Naive thymus-derived CD4-positive, alpha-beta T cell (primary cell): ENCODE measurements at regions of chr4 and their contacts with region 1.

Region 1: DNA sequence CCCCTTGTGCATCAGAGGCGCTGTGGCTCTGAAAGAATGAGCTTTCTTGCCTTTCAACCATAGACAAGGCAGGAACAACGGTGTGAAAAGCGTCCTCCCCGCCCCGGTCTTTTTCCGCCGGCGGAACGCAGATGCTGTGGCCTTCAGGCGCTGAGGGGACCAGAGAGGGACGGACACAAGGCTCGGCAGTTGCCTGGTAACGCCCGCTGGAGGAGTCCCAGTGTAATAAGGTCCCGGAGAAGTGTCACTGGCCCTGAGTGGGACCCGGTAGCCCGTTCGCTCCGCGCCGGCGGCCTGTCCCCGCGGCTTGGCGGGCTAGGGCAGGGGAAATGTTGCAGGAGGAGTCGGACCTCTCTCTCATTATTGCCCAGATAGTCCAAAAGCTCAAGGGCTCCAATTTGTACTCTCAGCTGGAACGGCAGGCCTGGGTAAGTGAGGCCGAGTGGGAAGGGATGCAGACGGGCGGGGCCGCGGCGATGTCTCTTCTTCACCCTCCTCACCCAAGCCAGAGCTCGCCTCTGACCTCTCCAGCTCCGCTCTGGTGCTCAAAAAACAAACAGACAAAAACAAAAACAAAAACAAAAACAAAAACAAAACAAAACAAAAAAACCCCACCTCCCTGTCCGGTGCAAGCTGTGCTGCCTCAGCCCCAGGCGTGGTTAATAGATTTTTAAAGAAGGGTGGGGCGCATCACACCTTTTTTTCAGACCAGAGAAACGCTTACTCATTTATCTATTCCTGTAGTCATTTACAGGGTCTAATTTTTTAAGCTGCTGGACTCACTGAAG is at the start of gene TBC1D19:
- DNase-seq: peak; percentile 77 to 92 (median 87)
- ATAC-seq: peak; percentile 96
- H3K4me3 ChIP-seq: peak within 1 kb of the TSS; percentile 83
- H3K4me3 Mint-ChIP-seq: peak within 1 kb of the TSS; percentile 86 to 98 (median 95)
- H3K27ac ChIP-seq: peak within 1 kb of the TSS; percentile 92
- H3K27ac Mint-ChIP-seq: peak within 1 kb of the TSS; percentile 96 to 100 (median 98)
- H3K4me1 ChIP-seq: peaks cover 10 to 11% of the 10 kb centered on the region in 2 donors
- H3K4me1 Mint-ChIP-seq: peaks cover 10 to 51% (median 28%) of the 10 kb centered on the region in 7 donors
- H3K27me3 ChIP-seq: no peaks in the 10 kb centered on the region
- H3K27me3 Mint-ChIP-seq: peaks cover 0 to 5% (median 0%) of the 10 kb centered on the region in 5 donors
- total RNA-seq, gene TBC1D19: 4.9 to 8.7 (median 6.4) TPM

Region 2: GRCh38 chr4:25159884-25160713 is 1424.0 kb before region 1 on chr4 and contains the start of gene SEPSECS:
- CTCF ChIA-PET with region 1: no interaction called
- POLR2A ChIA-PET with region 1: no interaction called
- intact Hi-C with region 1: loop called (anchors 5 kb)
- DNase-seq: peak; percentile 82 to 96 (median 94)
- ATAC-seq: peak; percentile 89
- H3K4me3 ChIP-seq: peak within 1 kb of the TSS; percentile 75
- H3K4me3 Mint-ChIP-seq: peak within 1 kb of the TSS; percentile 87 to 97 (median 94)
- H3K27ac ChIP-seq: peak within 1 kb of the TSS; percentile 97
- H3K27ac Mint-ChIP-seq: peak within 1 kb of the TSS; percentile 93 to 98 (median 96)
- H3K4me1 ChIP-seq: peaks cover 4 to 14% of the 10 kb centered on the region in 2 donors
- H3K4me1 Mint-ChIP-seq: peaks cover 33 to 66% (median 52%) of the 10 kb centered on the region in 7 donors
- H3K27me3 ChIP-seq: no peaks in the 10 kb centered on the region
- H3K27me3 Mint-ChIP-seq: peaks cover 0 to 2% (median 0%) of the 10 kb centered on the region in 5 donors
- total RNA-seq, gene SEPSECS: 14.4 to 25.0 (median 17.2) TPM

Region 3: DNA sequence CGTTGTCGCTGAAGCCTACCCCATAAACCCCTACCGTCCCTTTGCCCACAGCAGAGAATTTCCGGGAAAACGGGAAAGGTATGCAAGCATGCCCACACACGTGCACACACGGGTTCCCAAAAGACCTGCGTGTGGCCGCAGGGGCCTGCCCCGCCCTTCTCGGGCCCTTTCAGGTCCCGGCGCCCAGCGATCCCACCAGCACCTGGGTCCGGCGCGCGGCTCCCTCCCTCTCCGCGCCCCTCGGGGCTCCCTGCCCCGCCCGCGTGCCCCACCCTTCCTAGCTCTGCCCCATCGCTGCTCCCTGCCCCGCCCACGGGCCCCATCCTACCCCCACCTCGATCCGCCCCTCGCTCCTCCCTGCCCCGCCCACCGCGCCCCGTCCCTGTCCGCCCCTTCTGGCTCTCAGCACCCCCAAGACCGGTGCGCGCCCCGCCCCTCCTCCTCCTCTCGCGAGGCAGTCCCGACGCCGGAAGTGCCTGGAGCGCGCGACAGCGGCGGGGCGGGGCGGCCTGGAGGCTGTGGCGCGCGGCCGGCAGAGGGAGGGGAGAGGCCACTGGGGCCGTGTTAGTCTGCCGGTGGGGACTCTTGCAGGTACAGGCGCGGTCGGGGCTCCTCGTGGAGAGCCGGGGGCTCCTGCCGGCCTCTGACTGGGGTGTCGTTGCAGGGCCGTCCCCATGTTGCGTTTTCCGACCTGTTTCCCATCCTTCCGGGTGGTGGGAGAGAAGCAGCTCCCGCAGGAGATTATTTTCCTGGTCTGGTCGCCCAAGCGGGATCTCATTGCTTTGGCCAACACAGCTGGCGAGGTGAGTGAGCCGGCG is 1207.1 kb before region 1 on chr4 and contains the start of gene ANAPC4:
- CTCF ChIA-PET with region 1: no interaction called
- POLR2A ChIA-PET with region 1: no interaction called
- intact Hi-C with region 1: loop called (anchors 5 to 10 kb)
- DNase-seq: peak; percentile 85 to 97 (median 92)
- ATAC-seq: peak; percentile 97
- H3K4me3 ChIP-seq: peak within 1 kb of the TSS; percentile 96
- H3K4me3 Mint-ChIP-seq: peak within 1 kb of the TSS in 2 of 10 donors; percentile 78 to 83
- H3K27ac ChIP-seq: peak within 1 kb of the TSS; percentile 76
- H3K27ac Mint-ChIP-seq: peak within 1 kb of the TSS in 7 of 9 donors; percentile 64 to 93 (median 83)
- H3K4me1 ChIP-seq: peaks cover 11 to 17% of the 10 kb centered on the region in 2 donors
- H3K4me1 Mint-ChIP-seq: peaks cover 0 to 18% (median 13%) of the 10 kb centered on the region in 7 donors
- H3K27me3 ChIP-seq: no peaks in the 10 kb centered on the region
- H3K27me3 Mint-ChIP-seq: no peaks in the 10 kb centered on the region
- total RNA-seq, gene ANAPC4: 40.6 to 55.3 (median 50.4) TPM

Region 4: GRCh38 chr4:25862411-25863346 is 721.4 kb before region 1 on chr4 and contains the start of gene SEL1L3:
- CTCF ChIA-PET with region 1: no interaction called
- POLR2A ChIA-PET with region 1: interaction called, 9 read pairs
- intact Hi-C with region 1: loop called (anchors 2 to 5 kb)
- DNase-seq: peak in 8 of 9 donors; percentile 13 to 77 (median 29)
- ATAC-seq: peak; percentile 59
- H3K4me3 ChIP-seq: peak within 1 kb of the TSS; percentile 68
- H3K4me3 Mint-ChIP-seq: peak within 1 kb of the TSS; percentile 94 to 100 (median 98)
- H3K27ac ChIP-seq: peak within 1 kb of the TSS; percentile 71
- H3K27ac Mint-ChIP-seq: peak within 1 kb of the TSS; percentile 88 to 99 (median 96)
- H3K4me1 ChIP-seq: peaks cover 30 to 32% of the 10 kb centered on the region in 2 donors
- H3K4me1 Mint-ChIP-seq: peaks cover 32 to 44% (median 39%) of the 10 kb centered on the region in 7 donors
- H3K27me3 ChIP-seq: no peaks in the 10 kb centered on the region
- H3K27me3 Mint-ChIP-seq: peaks cover 0 to 3% (median 0%) of the 10 kb centered on the region in 5 donors
- total RNA-seq, gene SEL1L3: 38.1 to 55.8 (median 47.0) TPM

Region 5: DNA sequence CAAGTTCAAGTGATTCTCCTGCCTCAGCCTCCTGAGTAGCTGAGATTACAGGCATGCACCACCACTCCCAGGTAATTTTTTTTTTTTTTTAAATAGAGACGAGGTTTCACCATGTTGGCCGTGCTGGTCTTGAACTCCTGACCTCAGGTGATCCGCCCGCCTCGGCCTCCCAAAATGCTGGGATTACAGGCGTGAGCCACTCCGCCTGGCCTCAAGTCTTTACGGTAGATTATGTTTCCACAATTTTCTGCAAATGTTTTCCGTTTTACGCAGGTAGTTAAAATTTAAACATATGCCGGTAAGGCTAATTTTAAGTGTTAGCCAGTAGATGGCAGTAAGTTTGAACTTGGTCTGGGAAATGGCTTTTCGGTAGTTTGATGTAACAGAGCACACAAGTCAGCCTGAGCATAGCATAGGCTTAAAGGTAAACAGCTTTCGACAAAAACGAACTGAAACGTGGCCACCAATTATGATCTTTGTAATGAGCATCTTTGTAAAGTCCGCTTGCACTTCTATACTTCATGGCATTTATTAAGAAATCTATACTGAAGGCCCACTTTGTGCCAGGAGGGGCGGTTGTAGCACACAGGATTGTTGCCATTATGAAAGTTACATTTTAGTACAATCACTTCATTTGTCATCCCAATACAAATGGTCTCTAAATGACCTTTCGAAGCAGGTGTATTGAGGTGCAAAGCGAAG is 124.9 kb before region 1 on chr4:
- CTCF ChIA-PET with region 1: no interaction called
- POLR2A ChIA-PET with region 1: interaction called, 3 read pairs
- intact Hi-C with region 1: loop called (anchors 1 kb)
- DNase-seq: peak in 7 of 9 donors; percentile 15 to 62 (median 51)
- ATAC-seq: peak; percentile 62
- H3K4me3 ChIP-seq: no peak overlapping the region
- H3K4me3 Mint-ChIP-seq: peak overlapping the region in 9 of 10 donors; percentile 21 to 82 (median 61)
- H3K27ac ChIP-seq: no peak overlapping the region
- H3K27ac Mint-ChIP-seq: peak overlapping the region in 5 of 9 donors; percentile 5 to 68 (median 60)
- H3K4me1 ChIP-seq: peaks cover 0 to 16% of the 10 kb centered on the region in 2 donors
- H3K4me1 Mint-ChIP-seq: peaks cover 0 to 30% (median 20%) of the 10 kb centered on the region in 7 donors
- H3K27me3 ChIP-seq: no peaks in the 10 kb centered on the region
- H3K27me3 Mint-ChIP-seq: no peaks in the 10 kb centered on the region

Region 6: DNA sequence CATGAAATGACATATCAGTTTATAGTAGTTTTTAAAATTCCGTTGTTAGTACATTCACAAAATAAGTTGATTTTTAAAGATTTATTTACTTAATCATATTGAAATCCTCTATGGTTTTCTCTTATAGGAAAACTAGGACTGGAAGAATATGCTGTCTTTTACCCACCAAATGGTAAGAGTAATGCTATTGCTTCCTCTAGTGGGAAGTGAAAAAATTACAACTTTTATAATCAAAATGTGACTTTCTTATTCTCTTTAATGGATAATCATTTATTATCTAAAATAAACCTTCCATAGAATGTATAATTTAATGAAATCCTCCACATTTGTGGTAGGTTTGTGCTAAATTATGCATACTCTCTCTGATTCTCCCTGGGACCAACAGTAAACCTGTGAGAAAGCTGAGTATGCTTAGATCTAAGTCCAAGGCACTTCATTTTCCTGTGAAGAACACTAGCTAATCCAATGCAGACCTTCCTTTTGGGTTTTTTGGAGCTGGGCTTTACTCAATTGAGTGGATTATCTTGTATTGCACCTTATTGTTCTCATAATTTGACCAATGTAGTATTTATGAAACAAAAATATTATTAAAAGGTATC is 136.0 kb after region 1 on chr4:
- CTCF ChIA-PET with region 1: no interaction called
- POLR2A ChIA-PET with region 1: no interaction called
- intact Hi-C with region 1: loop called in 1 of 2 experiments (anchors 5 kb)
- DNase-seq: no peak
- ATAC-seq: no peak
- H3K4me3 ChIP-seq: no peak overlapping the region
- H3K4me3 Mint-ChIP-seq: no peak overlapping the region
- H3K27ac ChIP-seq: no peak overlapping the region
- H3K27ac Mint-ChIP-seq: no peak overlapping the region
- H3K4me1 ChIP-seq: peaks cover 5 to 9% of the 10 kb centered on the region in 2 donors
- H3K4me1 Mint-ChIP-seq: peaks cover 0 to 23% (median 13%) of the 10 kb centered on the region in 7 donors
- H3K27me3 ChIP-seq: no peaks in the 10 kb centered on the region
- H3K27me3 Mint-ChIP-seq: no peaks in the 10 kb centered on the region

Region 7: DNA sequence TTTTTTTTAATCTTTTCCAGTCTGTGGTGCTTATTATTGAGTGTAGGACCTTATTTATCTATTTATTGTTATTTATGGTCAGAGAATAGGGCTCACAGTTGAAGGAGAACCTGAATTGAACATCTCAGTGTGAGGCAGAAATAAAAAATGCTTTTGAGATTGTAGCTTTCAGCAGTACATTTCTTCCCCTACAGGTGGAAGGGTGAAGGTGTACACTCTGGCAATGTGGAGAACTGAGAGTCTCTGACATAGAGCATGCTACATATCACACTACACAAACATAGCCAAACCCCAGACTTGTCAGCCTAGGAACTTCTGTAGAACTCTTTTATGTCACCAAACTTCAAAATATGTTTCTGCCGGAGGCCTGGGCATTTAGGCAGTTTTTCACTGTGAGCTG is 416.8 kb after region 1 on chr4:
- CTCF ChIA-PET with region 1: no interaction called
- POLR2A ChIA-PET with region 1: no interaction called
- intact Hi-C with region 1: loop called in 1 of 2 experiments (anchors 5 kb)
- DNase-seq: peak in 6 of 9 donors; percentile 15 to 44 (median 32)
- ATAC-seq: peak; percentile 86
- H3K4me3 ChIP-seq: no peak overlapping the region
- H3K4me3 Mint-ChIP-seq: no peak overlapping the region
- H3K27ac ChIP-seq: no peak overlapping the region
- H3K27ac Mint-ChIP-seq: peak overlapping the region in 8 of 9 donors; percentile 33 to 78 (median 62)
- H3K4me1 ChIP-seq: peaks cover 12 to 16% of the 10 kb centered on the region in 2 donors
- H3K4me1 Mint-ChIP-seq: peaks cover 19 to 65% (median 53%) of the 10 kb centered on the region in 7 donors
- H3K27me3 ChIP-seq: no peaks in the 10 kb centered on the region
- H3K27me3 Mint-ChIP-seq: no peaks in the 10 kb centered on the region